Astrocyte of the cerebellum (primary cell): ENCODE measurements at regions of chr4 and their contacts with region 1.

Region 1: GRCh38 chr4:178612733-178613132 is 1170.5 kb upstream of the AGA start:
- DNase-seq: no peak
- H3K4me3 ChIP-seq: no peak overlapping the region
- CTCF ChIP-seq: no peak

Region 2: DNA sequence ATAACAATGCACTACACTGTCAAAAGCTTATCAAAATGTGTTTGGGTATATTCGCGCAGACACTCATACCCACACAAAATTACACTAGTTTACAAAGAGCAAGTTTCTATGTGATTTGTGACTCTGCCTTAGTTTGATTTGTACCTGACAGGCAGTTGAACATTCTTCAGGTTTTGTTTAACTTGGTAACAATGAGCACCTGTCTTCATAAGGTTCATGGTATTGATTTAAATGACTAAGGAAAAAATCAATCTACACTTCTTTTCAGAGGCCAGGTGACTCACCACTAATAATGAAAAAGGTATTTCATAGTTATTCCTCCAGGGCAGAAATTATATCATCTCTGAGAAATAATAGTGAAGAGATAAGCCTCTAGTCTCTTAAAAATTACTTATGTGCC is 55.9 kb before region 1 on chr4:
- in situ Hi-C with region 1: loop called (anchors 5 kb)
- DNase-seq: no peak
- H3K4me3 ChIP-seq: no peak overlapping the region
- CTCF ChIP-seq: no peak

Region 3: GRCh38 chr4:178577933-178578332 is 34.8 kb before region 1 on chr4:
- in situ Hi-C with region 1: no loop called
- DNase-seq: no peak
- H3K4me3 ChIP-seq: no peak overlapping the region
- CTCF ChIP-seq: no peak

Region 4: GRCh38 chr4:178976861-178977260 is 364.1 kb after region 1 on chr4:
- in situ Hi-C with region 1: no loop called
- DNase-seq: no peak
- H3K4me3 ChIP-seq: no peak overlapping the region
- CTCF ChIP-seq: no peak